Mammary epithelial cell (primary cell): ENCODE measurements at regions of chr9 and their contacts with region 1.

Region 1: DNA sequence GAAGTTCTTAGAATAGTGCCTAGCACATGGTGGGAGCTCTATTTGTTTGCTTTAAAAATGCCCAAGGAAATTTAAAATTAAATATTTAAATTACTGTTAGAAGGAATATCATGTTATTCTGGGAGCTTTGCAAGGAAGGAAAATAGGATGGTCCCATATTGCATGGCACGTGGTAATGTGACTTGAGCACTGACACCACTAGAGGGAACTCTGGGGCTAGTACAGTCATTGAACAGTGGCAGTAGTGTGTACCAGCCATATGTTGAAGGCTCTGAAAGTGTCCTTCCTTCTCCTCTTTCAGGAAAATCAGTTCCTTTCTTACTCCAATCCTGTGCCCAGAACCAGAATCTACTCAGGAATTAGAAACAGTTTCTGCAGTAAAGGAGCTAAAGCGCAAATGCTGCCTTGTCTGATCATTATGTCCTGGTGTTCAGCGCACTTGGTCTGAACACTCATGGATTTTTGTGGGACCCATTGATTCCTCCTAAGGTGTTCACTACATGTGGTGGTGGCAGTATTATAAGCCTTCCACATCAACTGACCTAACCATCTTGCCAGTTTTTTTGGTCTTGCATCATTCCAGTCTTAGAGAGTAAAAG is 54.1 kb downstream of the GDA start:
- DNase-seq: peak; percentile 40
- H3K4me3 ChIP-seq: no peak overlapping the region
- H3K27ac ChIP-seq: no peak overlapping the region
- H3K4me1 ChIP-seq: no peaks in the 10 kb centered on the region
- H3K27me3 ChIP-seq: peaks cover 5% of the 10 kb centered on the region
- CTCF ChIP-seq: peak; percentile 61 to 86

Region 2: GRCh38 chr9:71683598-71684235 is 519.6 kb before region 1 on chr9:
- CTCF ChIA-PET with region 1: no interaction called
- dilution Hi-C with region 1: no loop called
- in situ Hi-C with region 1: no loop called
- intact Hi-C with region 1: no loop called
- DNase-seq: peak; percentile 83
- H3K4me3 ChIP-seq: no peak overlapping the region
- H3K27ac ChIP-seq: peak overlapping the region; percentile 54
- H3K4me1 ChIP-seq: peaks cover 62% of the 10 kb centered on the region
- H3K27me3 ChIP-seq: no peaks in the 10 kb centered on the region
- CTCF ChIP-seq: peak; percentile 67 to 85

Region 3: GRCh38 chr9:71990466-71990865 is 212.8 kb before region 1 on chr9:
- CTCF ChIA-PET with region 1: interaction called, 17 read pairs
- dilution Hi-C with region 1: no loop called
- in situ Hi-C with region 1: no loop called
- intact Hi-C with region 1: no loop called
- DNase-seq: no peak
- H3K4me3 ChIP-seq: no peak overlapping the region
- H3K27ac ChIP-seq: no peak overlapping the region
- H3K4me1 ChIP-seq: no peaks in the 10 kb centered on the region
- H3K27me3 ChIP-seq: no peaks in the 10 kb centered on the region
- CTCF ChIP-seq: no peak

Region 4: DNA sequence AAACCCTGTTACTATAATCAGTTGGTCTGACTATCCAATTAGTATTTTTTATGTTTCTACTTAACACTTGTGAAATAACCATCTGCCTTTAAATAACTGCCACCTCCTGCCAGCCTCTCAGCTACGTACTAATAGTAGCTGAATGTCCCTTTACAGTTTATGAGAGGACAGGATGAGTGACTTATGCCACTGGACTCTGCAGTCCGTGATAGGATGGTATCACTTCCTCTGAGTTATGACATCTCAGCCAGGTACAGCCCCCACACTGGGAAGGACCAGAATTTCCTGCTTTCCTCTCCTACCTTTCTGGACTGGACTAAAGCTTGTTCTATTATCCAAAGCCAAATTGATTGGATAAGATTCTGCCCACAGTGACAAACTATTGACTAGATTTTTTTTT is 58.8 kb after region 1 on chr9:
- CTCF ChIA-PET with region 1: no interaction called
- dilution Hi-C with region 1: loop called (anchors 5 kb)
- in situ Hi-C with region 1: no loop called
- intact Hi-C with region 1: no loop called
- DNase-seq: no peak
- H3K4me3 ChIP-seq: no peak overlapping the region
- H3K27ac ChIP-seq: no peak overlapping the region
- H3K4me1 ChIP-seq: no peaks in the 10 kb centered on the region
- H3K27me3 ChIP-seq: no peaks in the 10 kb centered on the region
- CTCF ChIP-seq: no peak

Region 5: DNA sequence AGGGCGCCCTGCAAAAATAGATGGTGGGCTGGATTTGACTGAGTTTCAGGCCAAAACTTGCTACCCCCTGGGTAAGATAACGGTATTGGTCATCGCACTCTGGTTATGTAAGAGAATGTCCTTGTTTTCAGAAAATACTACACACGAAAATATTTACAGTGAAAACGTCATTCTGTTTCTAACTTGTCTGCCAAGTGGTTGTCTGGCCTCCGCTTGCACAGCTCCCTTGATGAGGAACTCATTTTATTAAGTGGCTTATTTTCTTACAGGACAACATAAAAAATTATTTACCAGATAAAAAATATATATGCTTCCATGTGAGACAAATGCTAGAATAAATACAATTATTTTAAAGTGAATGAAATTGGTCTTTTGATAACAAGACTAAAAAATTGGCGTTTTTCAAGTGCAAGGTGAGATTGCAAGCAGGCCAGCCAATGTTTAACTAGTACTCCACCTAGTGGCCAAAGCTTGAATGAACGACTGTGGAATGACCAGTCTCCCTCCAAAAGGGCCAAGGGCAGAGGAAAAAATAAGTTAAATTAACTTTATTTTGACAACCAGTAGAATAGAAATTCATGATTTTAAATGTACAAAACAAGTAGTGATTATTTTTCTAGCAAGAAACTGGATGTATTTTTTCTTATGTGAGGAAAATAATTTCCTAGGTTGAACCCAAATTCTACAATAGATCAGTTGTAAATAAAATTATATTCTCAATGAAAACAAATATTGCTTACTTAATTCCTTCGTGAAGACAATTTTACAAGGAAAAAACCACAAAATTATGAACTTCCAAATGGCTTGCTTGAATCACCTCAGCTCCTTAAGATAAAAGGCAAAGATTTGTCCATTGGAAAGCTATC is 68.5 kb after region 1 on chr9:
- CTCF ChIA-PET with region 1: interaction called, 10 read pairs
- dilution Hi-C with region 1: no loop called
- in situ Hi-C with region 1: no loop called
- intact Hi-C with region 1: loop called (anchors 1 kb)
- DNase-seq: peak; percentile 35
- H3K4me3 ChIP-seq: no peak overlapping the region
- H3K27ac ChIP-seq: no peak overlapping the region
- H3K4me1 ChIP-seq: peaks cover 14% of the 10 kb centered on the region
- H3K27me3 ChIP-seq: no peaks in the 10 kb centered on the region
- CTCF ChIP-seq: peak; percentile 77 to 86